ENCODE measurements at regions of chr5 and their contacts with region 1.

Region 1: DNA sequence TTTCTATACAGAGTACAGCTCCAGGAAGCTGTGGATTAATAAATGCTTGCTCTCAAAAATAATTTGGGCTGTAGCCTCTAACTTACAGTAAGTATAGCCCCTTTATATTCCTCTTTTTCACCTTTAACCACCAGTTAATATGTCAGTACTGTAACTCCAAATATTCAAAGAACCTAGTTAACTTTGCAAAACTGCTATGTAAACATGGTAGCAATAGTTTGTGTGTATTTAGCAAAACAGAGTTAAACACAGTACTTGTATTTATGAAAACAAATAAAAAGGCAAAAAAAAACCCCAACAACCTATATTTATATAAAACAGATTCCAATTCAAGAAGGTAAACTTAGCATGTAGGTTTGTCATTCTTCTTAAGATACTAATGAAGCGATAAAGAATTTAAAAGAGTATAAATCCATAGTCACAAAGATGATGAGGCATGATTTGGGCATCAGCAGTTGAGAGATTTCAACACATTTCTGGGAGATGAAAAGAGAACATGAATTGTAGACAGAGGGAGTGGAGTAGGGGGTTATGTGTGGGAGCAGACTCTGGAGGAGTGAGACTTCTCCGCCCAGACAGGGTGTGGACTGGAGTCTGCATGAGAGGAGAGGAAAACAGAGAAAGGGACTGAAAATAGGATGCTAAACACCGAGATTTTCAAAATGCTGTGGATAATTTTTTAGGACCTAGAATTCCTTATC is 47.0 kb upstream of the F2RL1 start:
- DNase-seq: no peak
- H3K4me3 ChIP-seq: no peak overlapping the region
- H3K27ac ChIP-seq: no peak overlapping the region
- H3K27me3 ChIP-seq: no peaks in the 10 kb centered on the region
- CTCF ChIP-seq: no peak

Region 2: DNA sequence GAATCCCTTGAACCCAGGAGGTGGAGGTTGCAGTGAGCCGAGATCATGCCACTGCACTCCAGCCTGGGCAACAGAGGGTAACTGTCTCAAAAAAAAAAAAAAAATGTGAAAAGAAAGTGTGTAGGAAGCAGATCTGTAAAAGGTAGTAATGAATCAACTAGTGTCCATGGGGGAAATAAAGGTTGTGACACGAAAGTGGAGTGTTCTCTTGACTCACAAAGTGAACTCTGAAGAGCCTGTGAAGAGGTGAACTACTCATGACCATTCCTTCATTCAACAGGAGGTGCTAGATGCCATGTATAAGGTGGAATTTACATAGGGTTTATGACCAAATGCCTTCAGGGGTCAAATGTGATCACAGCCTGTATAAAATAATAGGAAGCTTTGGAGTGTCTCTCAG is 356.0 kb before region 1 on chr5:
- CTCF ChIA-PET with region 1: no interaction called
- POLR2A ChIA-PET with region 1: no interaction called
- DNase-seq: no peak
- H3K4me3 ChIP-seq: no peak overlapping the region
- H3K27ac ChIP-seq: no peak overlapping the region
- H3K27me3 ChIP-seq: no peaks in the 10 kb centered on the region
- CTCF ChIP-seq: no peak

Region 3: GRCh38 chr5:76608833-76609232 is 163.0 kb before region 1 on chr5:
- CTCF ChIA-PET with region 1: interaction called, 86 read pairs
- POLR2A ChIA-PET with region 1: no interaction called
- DNase-seq: peak; percentile 79
- H3K4me3 ChIP-seq: no peak overlapping the region
- H3K27ac ChIP-seq: peak overlapping the region; percentile 54
- H3K27me3 ChIP-seq: no peaks in the 10 kb centered on the region
- CTCF ChIP-seq: no peak

Region 4: GRCh38 chr5:76641514-76642120 is 130.2 kb before region 1 on chr5:
- CTCF ChIA-PET with region 1: interaction called, 50 read pairs
- POLR2A ChIA-PET with region 1: no interaction called
- DNase-seq: peak; percentile 55
- H3K4me3 ChIP-seq: no peak overlapping the region
- H3K27ac ChIP-seq: no peak overlapping the region
- H3K27me3 ChIP-seq: no peaks in the 10 kb centered on the region
- CTCF ChIP-seq: peak; percentile 87

Region 5: GRCh38 chr5:76701298-76701697 is 70.6 kb before region 1 on chr5:
- CTCF ChIA-PET with region 1: interaction called, 10 read pairs
- POLR2A ChIA-PET with region 1: no interaction called
- DNase-seq: peak; percentile 24
- H3K4me3 ChIP-seq: no peak overlapping the region
- H3K27ac ChIP-seq: no peak overlapping the region
- H3K27me3 ChIP-seq: no peaks in the 10 kb centered on the region
- CTCF ChIP-seq: no peak

Region 6: GRCh38 chr5:76736679-76737556 is 34.9 kb before region 1 on chr5:
- CTCF ChIA-PET with region 1: interaction called, 45 read pairs
- POLR2A ChIA-PET with region 1: no interaction called
- DNase-seq: no peak
- H3K4me3 ChIP-seq: no peak overlapping the region
- H3K27ac ChIP-seq: no peak overlapping the region
- H3K27me3 ChIP-seq: no peaks in the 10 kb centered on the region
- CTCF ChIP-seq: no peak

Region 7: GRCh38 chr5:76790632-76791290 is 18.9 kb after region 1 on chr5:
- CTCF ChIA-PET with region 1: interaction called, 19 read pairs
- POLR2A ChIA-PET with region 1: interaction called, 5 read pairs
- DNase-seq: peak; percentile 94
- H3K4me3 ChIP-seq: no peak overlapping the region
- H3K27ac ChIP-seq: peak overlapping the region; percentile 96
- H3K27me3 ChIP-seq: no peaks in the 10 kb centered on the region
- CTCF ChIP-seq: no peak

Region 8: GRCh38 chr5:76893294-76893693 is 121.4 kb after region 1 on chr5:
- CTCF ChIA-PET with region 1: no interaction called
- POLR2A ChIA-PET with region 1: no interaction called
- DNase-seq: no peak
- H3K4me3 ChIP-seq: no peak overlapping the region
- H3K27ac ChIP-seq: no peak overlapping the region
- H3K27me3 ChIP-seq: peaks cover 23% of the 10 kb centered on the region
- CTCF ChIP-seq: no peak